Thyroid gland (tissue), 4 donors: ENCODE measurements at regions of chr11 and their contacts with region 1.

Region 1: DNA sequence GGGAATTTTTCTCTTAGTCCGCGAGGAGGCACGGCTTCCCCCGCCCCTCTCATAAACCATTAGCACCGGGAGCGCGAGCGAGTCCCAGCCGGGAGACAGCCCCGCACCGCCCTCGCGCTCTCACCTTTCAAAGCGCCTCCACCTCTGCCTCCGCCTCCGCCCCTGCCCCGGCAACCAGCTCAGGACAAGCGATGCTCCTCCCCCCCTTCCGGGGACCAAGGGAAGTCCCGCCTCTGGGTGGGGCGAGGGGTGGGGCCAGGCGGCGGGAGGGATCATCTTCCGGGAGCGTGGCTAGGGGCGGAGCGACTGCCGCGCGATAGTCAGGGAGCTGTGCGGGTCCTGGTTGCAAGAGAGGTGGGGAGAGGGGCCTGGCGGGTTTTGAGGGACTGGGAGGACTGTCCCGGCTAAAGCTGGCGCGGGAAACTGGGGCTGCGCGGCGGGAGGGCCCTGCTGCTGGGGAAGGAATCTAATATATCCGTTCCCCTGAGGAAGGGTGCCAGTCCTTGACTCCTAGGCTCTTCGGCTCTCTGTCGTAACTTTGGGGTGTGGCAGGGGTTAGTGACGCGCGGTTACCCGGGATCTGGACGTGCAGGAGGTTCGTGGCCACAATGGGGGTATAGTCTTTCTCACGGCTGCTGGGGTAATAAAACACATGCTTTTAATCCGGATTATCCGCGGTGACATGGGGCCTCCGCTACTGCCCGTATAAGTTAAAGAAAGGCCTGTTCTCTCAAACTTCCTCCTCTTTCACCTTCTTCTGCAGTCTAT is at the starts of genes CCDC82 and JRKL:
- DNase-seq: peak; percentile 97
- H3K4me3 ChIP-seq: peak within 1 kb of the TSS; percentile 65 to 88 (median 75)
- H3K27ac ChIP-seq: peak within 1 kb of the TSS; percentile 58 to 79 (median 79)
- H3K4me1 ChIP-seq: peaks cover 8 to 15% of the 10 kb centered on the region in 2 donors
- H3K27me3 ChIP-seq: no peaks in the 10 kb centered on the region
- CTCF ChIP-seq: no peak
- POLR2A ChIP-seq: peak in 1 of 2 donors; percentile 92
- total RNA-seq, gene CCDC82: 24.8 to 44.9 (median 28.8) TPM
- total RNA-seq, gene JRKL: 9.4 to 11.6 (median 10.4) TPM

Region 2: DNA sequence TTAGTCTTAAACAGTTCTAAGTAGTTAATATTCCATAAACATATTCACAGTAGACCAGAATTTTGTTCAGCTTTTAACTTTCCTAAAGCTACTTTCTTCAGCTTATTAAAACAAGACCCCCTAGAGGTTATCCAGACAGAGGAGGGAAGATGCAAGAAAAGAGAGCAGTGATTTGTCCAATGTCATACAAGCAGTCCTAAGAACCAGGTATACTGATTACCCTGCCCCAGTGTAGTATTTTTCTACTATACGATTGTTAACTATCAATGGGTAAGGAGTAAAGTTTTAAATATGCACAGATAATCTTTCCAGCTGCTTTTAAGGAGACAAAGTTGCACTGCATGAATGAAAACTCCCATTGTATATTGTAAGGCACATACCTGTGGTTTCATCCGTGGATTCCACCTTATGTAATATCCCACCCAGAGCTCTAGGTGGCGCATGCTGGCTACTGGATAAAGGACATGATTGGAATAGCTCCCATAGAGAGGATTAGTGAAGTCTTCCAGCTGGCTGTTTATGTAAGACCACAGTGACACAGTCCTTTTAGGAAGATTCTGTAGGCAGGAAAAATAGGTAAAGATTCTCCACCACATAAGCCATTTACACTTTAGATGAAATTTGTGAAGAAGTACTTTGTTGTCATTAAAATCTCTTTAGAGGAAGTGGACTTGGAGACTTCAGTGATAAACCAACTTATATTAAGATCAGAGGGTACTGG is 554.0 kb before region 1 on chr11:
- intact Hi-C with region 1: loop called (anchors 5 kb)
- DNase-seq: peak; percentile 62 to 72
- H3K4me3 ChIP-seq: no peak overlapping the region
- H3K27ac ChIP-seq: peak overlapping the region in 1 of 3 donors; percentile 41
- H3K4me1 ChIP-seq: no peaks in the 10 kb centered on the region
- H3K27me3 ChIP-seq: no peaks in the 10 kb centered on the region
- CTCF ChIP-seq: peak; percentile 58 to 93 (median 89)
- POLR2A ChIP-seq: no peak